ENCODE measurements at regions of chr9 and their contacts with region 1.

Region 1: DNA sequence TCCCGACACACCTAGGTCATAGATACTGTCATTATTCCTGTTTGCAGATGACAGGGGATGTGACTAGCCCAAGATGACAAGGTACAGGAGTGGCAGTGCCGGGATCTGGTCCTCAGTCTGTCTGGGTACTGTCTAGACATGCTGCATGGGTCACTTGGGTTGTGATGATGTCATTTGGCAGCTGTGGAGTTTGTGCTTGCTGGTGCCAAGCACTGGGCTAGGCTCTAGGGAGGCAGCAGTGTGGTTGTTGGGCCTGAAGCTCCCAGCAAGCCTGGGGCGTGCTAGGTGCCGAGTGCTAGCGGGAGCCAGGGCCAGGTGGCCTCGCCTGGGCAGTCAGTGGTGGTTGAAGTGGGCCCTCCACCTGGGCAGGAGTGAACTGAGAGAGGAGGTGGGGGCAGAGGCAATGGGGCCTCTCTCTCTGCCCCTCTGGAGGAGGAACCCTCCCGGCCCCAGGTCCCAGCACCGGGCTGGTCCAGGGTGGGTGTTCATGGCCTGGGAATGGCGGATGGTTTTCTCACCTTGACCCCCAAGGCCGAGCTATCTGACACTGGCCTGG is 8.8 kb upstream of the ASB6 start:
- DNase-seq: no peak
- H3K4me3 ChIP-seq: no peak overlapping the region
- H3K27ac ChIP-seq: no peak overlapping the region
- H3K4me1 ChIP-seq: no peaks in the 10 kb centered on the region
- H3K27me3 ChIP-seq: no peaks in the 10 kb centered on the region
- CTCF ChIP-seq: no peak

Region 2: GRCh38 chr9:129714511-129715061 is 63.8 kb after region 1 on chr9:
- intact Hi-C with region 1: loop called (anchors 5 kb)
- DNase-seq: no peak
- H3K4me3 ChIP-seq: no peak overlapping the region
- H3K27ac ChIP-seq: no peak overlapping the region
- H3K4me1 ChIP-seq: no peaks in the 10 kb centered on the region
- H3K27me3 ChIP-seq: no peaks in the 10 kb centered on the region
- CTCF ChIP-seq: no peak